ENCODE measurements at regions of chr6 and their contacts with region 1.

Region 1: GRCh38 chr6:107977283-107977682 is 19.3 kb upstream of the SEC63 start:
- DNase-seq: no peak
- H3K4me3 ChIP-seq: no peak overlapping the region
- H3K27ac ChIP-seq: no peak overlapping the region
- H3K4me1 ChIP-seq: peaks cover 0 to 3% (median under 1%) of the 10 kb centered on the region in 4 experiments; a peak in 2 of 7 replicates
- H3K27me3 ChIP-seq: no peaks in the 10 kb centered on the region
- CTCF ChIP-seq: peak in 2 of 3 experiments; percentile 30 to 40; a peak in 2 of 4 replicates
- EP300 ChIP-seq: no peak
- POLR2A ChIP-seq: no peak
- RAD21 ChIP-seq: peak; percentile 62 to 64

Region 2: GRCh38 chr6:107866606-107867301 is 110.5 kb before region 1 on chr6:
- CTCF ChIA-PET with region 1: no interaction called
- POLR2A ChIA-PET with region 1: no interaction called
- DNase-seq: no peak
- H3K4me3 ChIP-seq: no peak overlapping the region
- H3K27ac ChIP-seq: no peak overlapping the region
- H3K4me1 ChIP-seq: peaks cover 0 to 14% (median 10%) of the 10 kb centered on the region in 4 experiments
- H3K27me3 ChIP-seq: no peaks in the 10 kb centered on the region
- CTCF ChIP-seq: peak in 2 of 3 experiments; percentile 44 to 59; a peak in 2 of 4 replicates
- EP300 ChIP-seq: no peak
- POLR2A ChIP-seq: no peak; a peak in 1 of 3 replicates
- RAD21 ChIP-seq: peak; percentile 39 to 49

Region 3: GRCh38 chr6:107936162-107936909 is 40.9 kb before region 1 on chr6:
- CTCF ChIA-PET with region 1: no interaction called
- POLR2A ChIA-PET with region 1: no interaction called
- DNase-seq: no peak
- H3K4me3 ChIP-seq: no peak overlapping the region
- H3K27ac ChIP-seq: no peak overlapping the region
- H3K4me1 ChIP-seq: no peaks in the 10 kb centered on the region
- H3K27me3 ChIP-seq: no peaks in the 10 kb centered on the region
- CTCF ChIP-seq: no peak
- EP300 ChIP-seq: no peak
- POLR2A ChIP-seq: no peak
- RAD21 ChIP-seq: no peak

Region 4: GRCh38 chr6:108020472-108021116 is 43.3 kb after region 1 on chr6:
- CTCF ChIA-PET with region 1: interaction called, 12 read pairs
- POLR2A ChIA-PET with region 1: no interaction called
- DNase-seq: no peak
- H3K4me3 ChIP-seq: no peak overlapping the region
- H3K27ac ChIP-seq: no peak overlapping the region
- H3K4me1 ChIP-seq: no peaks in the 10 kb centered on the region
- H3K27me3 ChIP-seq: no peaks in the 10 kb centered on the region
- CTCF ChIP-seq: no peak
- EP300 ChIP-seq: no peak
- POLR2A ChIP-seq: no peak
- RAD21 ChIP-seq: no peak

Region 5: DNA sequence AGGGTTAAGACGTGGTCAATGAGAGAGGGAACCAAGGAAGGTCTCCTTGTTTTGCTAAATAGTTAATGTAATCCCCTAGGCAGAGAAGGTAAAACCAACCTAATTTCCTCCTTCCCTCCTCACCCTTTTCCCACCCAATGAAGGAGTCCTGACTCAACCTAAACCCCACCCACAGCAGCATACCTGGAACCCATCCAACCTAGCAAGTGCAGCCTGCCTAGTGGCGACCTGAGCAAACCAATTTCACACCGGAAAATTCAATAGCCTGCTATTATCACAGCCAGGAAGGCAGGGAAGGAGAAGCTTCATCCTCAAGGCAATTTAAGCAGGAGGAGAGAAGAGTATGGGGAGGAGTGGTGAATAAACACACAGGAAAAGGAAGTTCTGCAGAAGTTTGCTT is 50.3 kb after region 1 on chr6:
- CTCF ChIA-PET with region 1: interaction called, 22 read pairs
- POLR2A ChIA-PET with region 1: no interaction called
- DNase-seq: no peak
- H3K4me3 ChIP-seq: no peak overlapping the region
- H3K27ac ChIP-seq: no peak overlapping the region
- H3K4me1 ChIP-seq: no peaks in the 10 kb centered on the region
- H3K27me3 ChIP-seq: no peaks in the 10 kb centered on the region
- CTCF ChIP-seq: no peak
- EP300 ChIP-seq: no peak
- POLR2A ChIP-seq: no peak
- RAD21 ChIP-seq: no peak

Region 6: DNA sequence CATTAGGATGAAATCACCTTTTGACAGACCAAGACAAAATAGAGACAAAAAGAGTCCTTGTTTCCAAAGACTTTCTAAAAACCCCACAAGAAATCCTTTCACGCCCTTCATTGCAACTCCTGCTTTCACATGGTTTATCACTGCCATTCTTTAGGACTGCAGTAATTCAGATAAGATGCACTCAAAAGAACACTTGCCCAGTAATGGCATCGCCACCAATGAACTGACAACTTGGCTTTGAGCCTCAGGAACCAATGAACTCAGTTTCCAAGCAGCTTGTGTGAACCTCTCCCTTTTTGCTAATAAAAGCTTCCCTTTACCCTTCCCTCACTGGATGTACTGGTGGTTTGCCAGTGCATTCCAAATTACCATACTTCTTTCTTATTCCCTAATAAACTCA is 75.4 kb after region 1 on chr6:
- CTCF ChIA-PET with region 1: interaction called, 183 read pairs
- POLR2A ChIA-PET with region 1: interaction called, 8 read pairs
- DNase-seq: no peak
- H3K4me3 ChIP-seq: no peak overlapping the region
- H3K27ac ChIP-seq: no peak overlapping the region
- H3K4me1 ChIP-seq: no peaks in the 10 kb centered on the region
- H3K27me3 ChIP-seq: no peaks in the 10 kb centered on the region
- CTCF ChIP-seq: no peak
- EP300 ChIP-seq: no peak
- POLR2A ChIP-seq: no peak
- RAD21 ChIP-seq: no peak

Measured in H1 (cell line).